GM13976 (cell line): ENCODE measurements at regions of chr17 and their contacts with region 1.

Region 1: GRCh38 chr17:52106638-52107261 is 51.8 kb downstream of the CA10 start:
- DNase-seq: peak; percentile 46
- CTCF ChIP-seq: peak; percentile 62

Region 2: DNA sequence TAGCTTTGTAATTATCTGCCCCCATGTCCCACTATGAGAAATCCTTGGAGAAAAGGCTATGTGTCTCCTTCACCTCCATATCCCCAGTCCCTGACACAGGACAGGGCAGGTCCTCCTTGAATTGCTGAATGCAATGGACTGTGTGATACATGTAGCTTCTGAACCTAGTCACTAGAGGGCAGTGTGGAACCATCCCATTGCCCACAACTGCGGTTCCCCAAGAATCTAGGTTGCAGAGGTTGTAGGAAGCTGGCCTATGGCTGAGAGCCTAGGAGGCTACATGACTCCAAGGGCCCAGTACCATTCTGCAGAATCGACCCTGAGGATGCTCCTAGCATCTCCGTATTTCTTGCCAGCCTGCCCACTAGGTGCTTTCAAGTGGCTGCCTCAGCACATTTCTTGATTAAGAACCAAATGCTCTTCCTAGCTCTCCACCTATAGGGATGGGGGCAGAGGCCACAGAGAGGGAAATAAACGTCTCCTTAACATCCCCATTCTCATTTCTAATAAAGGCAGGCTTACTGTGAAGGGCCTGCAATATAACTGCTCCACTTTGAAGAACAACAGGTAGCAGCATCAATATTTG is 342.3 kb before region 1 on chr17:
- in situ Hi-C with region 1: loop called (anchors 10 kb)
- DNase-seq: peak; percentile 52
- CTCF ChIP-seq: peak; percentile 88

Region 3: GRCh38 chr17:52389632-52390031 is 282.9 kb after region 1 on chr17:
- in situ Hi-C with region 1: no loop called
- DNase-seq: no peak
- CTCF ChIP-seq: no peak